PC-3 (cell line): ENCODE measurements at regions of chr10 and their contacts with region 1.

Region 1: GRCh38 chr10:3647074-3647473 is 137.9 kb downstream of the KLF6 start:
- DNase-seq: no peak
- ATAC-seq: no peak
- H3K4me3 ChIP-seq: no peak overlapping the region
- H3K27ac ChIP-seq: no peak overlapping the region
- H3K4me1 ChIP-seq: no peaks in the 10 kb centered on the region
- H3K27me3 ChIP-seq: no peaks in the 10 kb centered on the region
- CTCF ChIP-seq: no peak

Region 2: GRCh38 chr10:3525832-3526449 is 121.1 kb before region 1 on chr10:
- CTCF ChIA-PET with region 1: no interaction called
- POLR2A ChIA-PET with region 1: no interaction called
- intact Hi-C with region 1: no loop called
- DNase-seq: peak; percentile 83
- ATAC-seq: peak; percentile 97
- H3K4me3 ChIP-seq: no peak overlapping the region
- H3K27ac ChIP-seq: 0 out of 2 replicates have a peak overlapping the region, but pooled peaks have one; percentile 18
- H3K4me1 ChIP-seq: peaks cover 28% of the 10 kb centered on the region
- H3K27me3 ChIP-seq: no peaks in the 10 kb centered on the region
- CTCF ChIP-seq: no peak

Region 3: DNA sequence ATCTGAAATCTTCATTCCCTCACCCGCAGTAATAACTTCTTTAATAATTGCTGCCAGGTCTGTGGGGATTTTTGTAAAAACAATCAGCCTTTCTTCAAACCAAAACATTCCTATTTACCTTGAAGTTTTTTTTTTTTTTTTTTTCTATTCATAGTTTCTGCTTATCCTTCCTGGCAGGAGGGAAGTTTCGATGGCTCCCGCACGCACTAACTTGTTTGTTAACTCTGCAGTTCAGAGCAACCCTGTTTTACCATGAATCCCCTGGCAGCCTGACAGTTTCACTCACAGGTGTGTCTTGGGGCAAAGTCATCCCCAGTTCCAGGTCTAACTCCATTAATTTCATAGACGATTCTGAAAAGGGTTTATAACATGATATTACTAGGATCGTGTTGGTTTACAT is 11.4 kb before region 1 on chr10:
- CTCF ChIA-PET with region 1: no interaction called
- POLR2A ChIA-PET with region 1: interaction called, 23 read pairs
- intact Hi-C with region 1: no loop called
- DNase-seq: peak; percentile 23
- ATAC-seq: no peak
- H3K4me3 ChIP-seq: no peak overlapping the region
- H3K27ac ChIP-seq: peak overlapping the region; percentile 23
- H3K4me1 ChIP-seq: peaks cover 15% of the 10 kb centered on the region; the same call in 1 of the 2 replicates
- H3K27me3 ChIP-seq: no peaks in the 10 kb centered on the region
- CTCF ChIP-seq: no peak